MCF 10A (cell line): ENCODE measurements at regions of chr11 and their contacts with region 1.

Region 1: DNA sequence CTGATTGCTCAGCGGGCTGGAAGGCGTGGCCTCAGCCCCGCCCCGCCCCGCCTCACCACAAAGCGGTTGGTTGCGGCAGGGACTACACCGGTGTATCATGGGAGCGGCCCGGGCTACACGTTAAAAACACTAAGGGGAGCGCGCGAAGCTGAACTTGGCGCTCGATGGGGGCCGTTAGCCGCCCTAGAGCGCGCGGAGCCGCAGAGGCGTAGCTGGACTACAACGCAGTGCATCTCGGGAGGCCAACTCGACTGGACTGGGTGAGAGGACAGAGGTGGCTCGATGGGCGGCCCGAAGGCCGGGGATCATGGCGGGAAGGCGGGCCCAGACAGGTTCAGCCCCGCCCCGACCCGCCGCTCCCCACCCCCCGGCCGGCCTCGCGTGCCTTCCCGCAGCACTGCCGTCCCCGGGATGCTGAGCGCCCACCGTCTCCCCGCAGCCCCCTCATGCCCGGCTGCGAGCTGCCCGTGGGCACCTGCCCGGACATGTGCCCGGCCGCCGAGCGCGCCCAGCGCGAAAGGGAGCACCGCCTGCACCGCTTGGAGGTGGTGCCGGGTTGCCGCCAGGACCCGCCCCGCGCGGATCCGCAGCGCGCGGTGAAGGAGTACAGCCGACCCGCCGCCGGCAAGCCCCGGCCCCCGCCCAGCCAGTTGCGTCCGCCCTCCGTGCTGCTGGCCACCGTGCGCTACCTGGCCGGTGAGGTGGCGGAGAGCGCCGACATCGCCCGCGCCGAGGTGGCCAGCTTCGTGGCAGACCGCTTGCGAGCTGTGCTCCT is at the start of gene SAC3D1:
- DNase-seq: peak; percentile 93
- H3K4me3 Mint-ChIP-seq: peak within 1 kb of the TSS; percentile 89
- H3K27ac Mint-ChIP-seq: peak within 1 kb of the TSS; percentile 84
- H3K4me1 Mint-ChIP-seq: peaks cover 10% of the 10 kb centered on the region
- H3K27me3 Mint-ChIP-seq: no peaks in the 10 kb centered on the region
- CTCF ChIP-seq: no peak
- total RNA-seq, gene SAC3D1: 10.3 and 14.0 TPM in 2 replicates

Region 2: DNA sequence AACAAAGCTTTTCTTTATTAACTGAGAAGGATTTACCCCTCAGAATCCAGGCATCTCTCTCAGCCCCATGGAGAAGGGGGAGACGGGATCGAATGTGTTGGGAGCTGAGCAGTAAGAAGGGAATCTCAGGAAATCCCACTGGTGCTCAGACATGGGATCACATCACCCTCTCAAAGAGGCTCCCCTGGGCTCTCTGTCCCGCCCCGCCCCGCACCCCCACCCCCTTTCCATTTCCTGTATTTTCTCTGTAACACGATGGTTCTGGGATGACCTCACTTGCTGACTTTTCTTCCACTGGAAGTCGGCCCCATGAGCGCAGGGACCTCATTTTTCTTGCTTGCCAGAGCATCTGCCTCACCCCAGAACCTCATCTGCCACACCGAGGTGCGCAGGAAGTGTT is 582.0 kb before region 1 on chr11:
- CTCF ChIA-PET with region 1: no interaction called
- POLR2A ChIA-PET with region 1: no interaction called
- intact Hi-C with region 1: no loop called
- DNase-seq: no peak
- H3K4me3 Mint-ChIP-seq: no peak overlapping the region
- H3K27ac Mint-ChIP-seq: no peak overlapping the region
- H3K4me1 Mint-ChIP-seq: peaks cover 2% of the 10 kb centered on the region
- H3K27me3 Mint-ChIP-seq: no peaks in the 10 kb centered on the region
- CTCF ChIP-seq: no peak

Region 3: GRCh38 chr11:65027213-65028067 is 13.6 kb before region 1 on chr11 and contains the start of gene SNX15:
- CTCF ChIA-PET with region 1: interaction called, 27 read pairs
- POLR2A ChIA-PET with region 1: interaction called, 13 read pairs
- intact Hi-C with region 1: no loop called
- DNase-seq: peak; percentile 97
- H3K4me3 Mint-ChIP-seq: peak within 1 kb of the TSS; percentile 75
- H3K27ac Mint-ChIP-seq: peak within 1 kb of the TSS; percentile 30
- H3K4me1 Mint-ChIP-seq: peaks cover 7% of the 10 kb centered on the region
- H3K27me3 Mint-ChIP-seq: no peaks in the 10 kb centered on the region
- CTCF ChIP-seq: peak; percentile 71
- total RNA-seq, gene SNX15: 18.0 and 21.0 TPM in 2 replicates

Region 4: DNA sequence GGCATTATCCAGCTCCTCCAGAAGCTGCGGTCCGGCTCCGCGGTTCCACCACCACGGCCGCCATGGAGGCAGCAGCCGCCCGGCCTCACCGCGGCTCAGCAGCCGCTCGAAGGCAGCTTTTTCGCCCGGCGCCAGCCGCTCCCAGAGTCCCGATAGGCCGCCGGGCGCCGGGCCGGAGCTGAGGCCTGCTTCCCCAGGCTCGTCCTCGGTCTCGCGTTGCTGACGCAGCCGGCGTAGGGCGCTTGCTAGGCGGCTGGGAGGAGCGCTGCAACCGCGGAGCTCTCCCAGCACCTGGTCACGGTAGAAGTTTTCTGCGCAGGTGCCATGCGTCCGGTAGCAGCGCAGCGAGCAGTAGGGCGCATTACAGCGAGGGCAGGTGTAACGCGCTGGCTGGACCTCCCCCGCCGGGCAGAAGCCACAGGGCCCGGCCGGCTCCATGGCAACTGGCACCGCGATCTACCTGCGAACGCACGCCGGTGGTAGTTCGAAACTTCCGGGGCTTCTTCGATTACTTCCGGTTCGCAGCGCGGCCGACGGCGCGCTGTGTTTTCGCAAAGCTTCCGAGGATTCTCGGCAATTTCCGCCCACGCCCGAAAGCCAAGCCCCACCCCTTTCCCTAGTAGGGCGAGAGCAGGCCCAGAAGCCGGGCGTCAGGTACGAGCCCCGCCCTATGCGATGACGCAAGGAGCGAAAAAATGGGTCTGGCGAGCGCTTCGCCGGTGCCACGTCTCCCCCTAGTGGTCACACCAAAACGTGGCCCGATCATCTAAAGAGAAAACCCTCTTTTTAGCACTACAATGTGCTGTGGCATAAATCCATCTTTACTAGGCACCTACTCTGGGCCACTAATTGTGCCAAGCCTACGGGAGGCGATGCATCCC is 76.4 kb after region 1 on chr11 and contains the start of gene ZNHIT2:
- CTCF ChIA-PET with region 1: interaction called, 4 read pairs
- POLR2A ChIA-PET with region 1: interaction called, 15 read pairs
- intact Hi-C with region 1: no loop called
- DNase-seq: peak; percentile 99
- H3K4me3 Mint-ChIP-seq: peak within 1 kb of the TSS; percentile 82
- H3K27ac Mint-ChIP-seq: peak within 1 kb of the TSS; percentile 88
- H3K4me1 Mint-ChIP-seq: peaks cover 16% of the 10 kb centered on the region
- H3K27me3 Mint-ChIP-seq: no peaks in the 10 kb centered on the region
- CTCF ChIP-seq: peak; percentile 84
- total RNA-seq, gene ZNHIT2: 22.0 and 23.6 TPM in 2 replicates